Panc1 (cell line): ENCODE measurements at regions of chr13 and their contacts with region 1.

Region 1: GRCh38 chr13:95191821-95192563 is 109.3 kb downstream of the ABCC4 start:
- DNase-seq: peak; percentile 43
- ATAC-seq: peak; percentile 98
- H3K4me3 ChIP-seq: no peak overlapping the region
- H3K27ac ChIP-seq: peak overlapping the region; percentile 39
- H3K4me1 ChIP-seq: peaks cover 18% of the 10 kb centered on the region
- H3K27me3 ChIP-seq: no peaks in the 10 kb centered on the region
- CTCF ChIP-seq: peak; percentile 89

Region 2: DNA sequence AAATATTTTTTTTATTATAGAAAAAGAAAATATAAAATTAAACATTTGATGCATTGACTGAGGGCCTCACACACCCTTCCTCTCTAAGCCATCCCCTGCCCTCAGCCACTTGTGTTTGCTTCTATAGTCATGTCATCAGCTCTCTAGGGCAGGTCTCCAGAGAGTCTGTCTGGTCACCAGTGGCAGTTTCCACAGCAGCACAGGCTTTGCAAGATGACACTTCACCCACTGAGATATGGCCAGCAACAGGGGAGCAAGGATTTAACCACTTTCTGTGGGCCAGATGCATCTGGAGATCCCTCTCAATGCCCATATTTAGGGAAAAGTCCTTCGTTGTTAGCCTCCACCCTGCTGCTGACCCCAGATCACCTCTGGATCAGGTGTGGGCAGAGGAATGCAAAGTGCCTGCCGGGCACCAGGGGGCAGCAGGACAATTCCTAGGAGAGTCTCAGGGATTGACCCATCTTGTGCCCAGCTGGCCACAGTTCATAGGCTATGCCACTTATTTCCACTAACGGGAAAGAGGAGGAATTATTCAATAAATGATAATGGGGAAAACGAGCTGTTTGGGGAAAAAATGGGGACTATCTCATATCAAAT is 104.4 kb after region 1 on chr13:
- CTCF ChIA-PET with region 1: interaction called, 3 read pairs
- POLR2A ChIA-PET with region 1: no interaction called
- in situ Hi-C with region 1: no loop called
- intact Hi-C with region 1: loop called (anchors 5 kb)
- DNase-seq: no peak
- ATAC-seq: no peak
- H3K4me3 ChIP-seq: no peak overlapping the region
- H3K27ac ChIP-seq: peak overlapping the region; percentile 70
- H3K4me1 ChIP-seq: peaks cover 27% of the 10 kb centered on the region
- H3K27me3 ChIP-seq: no peaks in the 10 kb centered on the region
- CTCF ChIP-seq: peak; percentile 81

Region 3: DNA sequence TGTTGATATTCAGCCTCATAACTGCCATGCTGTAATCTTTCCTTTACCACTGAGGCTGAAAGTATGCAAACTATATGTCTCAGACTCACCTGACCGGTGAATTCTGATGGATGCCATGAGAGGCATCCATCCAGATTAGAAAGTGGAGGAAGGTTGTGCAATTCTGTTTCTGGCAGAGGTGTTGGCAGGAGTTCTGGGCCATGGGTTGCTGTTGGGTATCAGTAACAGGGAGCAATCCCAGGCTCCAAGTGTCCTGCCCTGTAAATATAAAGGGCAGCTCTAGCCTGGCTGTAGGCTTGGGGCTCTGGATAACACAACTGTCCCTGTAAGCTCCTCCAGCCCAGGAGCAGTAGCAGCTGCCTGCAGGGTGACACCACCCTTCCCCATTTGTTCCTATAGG is 186.6 kb after region 1 on chr13:
- CTCF ChIA-PET with region 1: interaction called, 14 read pairs
- POLR2A ChIA-PET with region 1: no interaction called
- in situ Hi-C with region 1: no loop called
- intact Hi-C with region 1: loop called (anchors 1 kb)
- DNase-seq: no peak
- ATAC-seq: peak; percentile 60; the same call in 1 of the 2 replicates
- H3K4me3 ChIP-seq: no peak overlapping the region
- H3K27ac ChIP-seq: no peak overlapping the region
- H3K4me1 ChIP-seq: no peaks in the 10 kb centered on the region; the same call in 1 of the 2 replicates
- H3K27me3 ChIP-seq: no peaks in the 10 kb centered on the region
- CTCF ChIP-seq: no peak

Region 4: GRCh38 chr13:95385808-95386207 is 193.8 kb after region 1 on chr13:
- CTCF ChIA-PET with region 1: interaction called, 14 read pairs
- POLR2A ChIA-PET with region 1: no interaction called
- in situ Hi-C with region 1: no loop called
- intact Hi-C with region 1: no loop called
- DNase-seq: no peak
- ATAC-seq: no peak
- H3K4me3 ChIP-seq: no peak overlapping the region
- H3K27ac ChIP-seq: no peak overlapping the region
- H3K4me1 ChIP-seq: no peaks in the 10 kb centered on the region; the same call in 1 of the 2 replicates
- H3K27me3 ChIP-seq: no peaks in the 10 kb centered on the region
- CTCF ChIP-seq: no peak

Region 5: GRCh38 chr13:95403828-95404522 is 212.0 kb after region 1 on chr13:
- CTCF ChIA-PET with region 1: interaction called, 17 read pairs
- POLR2A ChIA-PET with region 1: no interaction called
- in situ Hi-C with region 1: no loop called
- intact Hi-C with region 1: loop called (anchors 1 kb)
- DNase-seq: peak; percentile 51
- ATAC-seq: peak; percentile 92
- H3K4me3 ChIP-seq: peak overlapping the region; percentile 14 to 47; a peak in 3 of 4 replicates
- H3K27ac ChIP-seq: peak overlapping the region; percentile 9; the same call in 1 of the 2 replicates
- H3K4me1 ChIP-seq: peaks cover 6% of the 10 kb centered on the region; the same call in 1 of the 2 replicates
- H3K27me3 ChIP-seq: no peaks in the 10 kb centered on the region
- CTCF ChIP-seq: peak; percentile 84

Region 6: GRCh38 chr13:95479731-95480130 is 287.7 kb after region 1 on chr13:
- CTCF ChIA-PET with region 1: interaction called, 4 read pairs
- POLR2A ChIA-PET with region 1: no interaction called
- in situ Hi-C with region 1: no loop called
- intact Hi-C with region 1: loop called (anchors 5 kb)
- DNase-seq: no peak
- ATAC-seq: no peak
- H3K4me3 ChIP-seq: no peak overlapping the region
- H3K27ac ChIP-seq: no peak overlapping the region
- H3K4me1 ChIP-seq: no peaks in the 10 kb centered on the region
- H3K27me3 ChIP-seq: no peaks in the 10 kb centered on the region
- CTCF ChIP-seq: no peak

Region 7: DNA sequence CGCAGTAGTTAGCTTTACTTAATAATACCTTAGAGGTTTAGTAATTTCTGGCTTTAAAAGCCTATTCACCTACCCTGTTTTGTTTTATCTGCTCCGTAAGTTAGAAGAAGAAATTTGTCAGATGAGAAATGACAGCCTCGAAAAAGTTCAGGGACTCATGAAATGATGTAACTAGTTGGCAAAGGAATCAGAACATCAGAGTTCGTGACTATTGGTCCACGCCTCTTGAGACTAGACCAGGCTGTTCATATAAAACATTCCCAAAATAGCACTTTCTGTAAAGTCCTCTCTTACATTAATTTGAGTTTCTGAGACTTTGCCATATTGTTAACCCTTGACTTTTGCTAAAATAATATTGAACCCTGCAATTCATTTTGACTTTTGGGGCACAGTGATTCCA is 989.9 kb after region 1 on chr13:
- CTCF ChIA-PET with region 1: no interaction called
- POLR2A ChIA-PET with region 1: no interaction called
- in situ Hi-C with region 1: no loop called
- intact Hi-C with region 1: no loop called
- DNase-seq: no peak
- ATAC-seq: no peak
- H3K4me3 ChIP-seq: no peak overlapping the region
- H3K27ac ChIP-seq: no peak overlapping the region
- H3K4me1 ChIP-seq: no peaks in the 10 kb centered on the region
- H3K27me3 ChIP-seq: no peaks in the 10 kb centered on the region
- CTCF ChIP-seq: no peak